Endothelial cell of umbilical vein (primary cell): ENCODE measurements at regions of chr3 and their contacts with region 1.

Region 1: GRCh38 chr3:159884661-159885402 is 103.8 kb upstream of the IL12A start:
- DNase-seq: peak; percentile 75
- H3K4me3 ChIP-seq: no peak overlapping the region
- H3K27ac ChIP-seq: peak overlapping the region; percentile 46
- H3K4me1 ChIP-seq: peaks cover 34% of the 10 kb centered on the region
- H3K27me3 ChIP-seq: no peaks in the 10 kb centered on the region
- CTCF ChIP-seq: peak; percentile 27 to 37
- POLR2A ChIP-seq: no peak

Region 2: GRCh38 chr3:159266779-159267178 is 618.1 kb before region 1 on chr3:
- CTCF ChIA-PET with region 1: interaction called, 6 read pairs
- POLR2A ChIA-PET with region 1: no interaction called
- dilution Hi-C with region 1: no loop called
- intact Hi-C with region 1: loop called (anchors 5 kb)
- DNase-seq: peak; percentile 29
- H3K4me3 ChIP-seq: no peak overlapping the region
- H3K27ac ChIP-seq: no peak overlapping the region
- H3K4me1 ChIP-seq: no peaks in the 10 kb centered on the region
- H3K27me3 ChIP-seq: peaks cover 4 to 12% of the 10 kb centered on the region in 2 experiments
- CTCF ChIP-seq: peak; percentile 15 to 39
- POLR2A ChIP-seq: no peak

Region 3: DNA sequence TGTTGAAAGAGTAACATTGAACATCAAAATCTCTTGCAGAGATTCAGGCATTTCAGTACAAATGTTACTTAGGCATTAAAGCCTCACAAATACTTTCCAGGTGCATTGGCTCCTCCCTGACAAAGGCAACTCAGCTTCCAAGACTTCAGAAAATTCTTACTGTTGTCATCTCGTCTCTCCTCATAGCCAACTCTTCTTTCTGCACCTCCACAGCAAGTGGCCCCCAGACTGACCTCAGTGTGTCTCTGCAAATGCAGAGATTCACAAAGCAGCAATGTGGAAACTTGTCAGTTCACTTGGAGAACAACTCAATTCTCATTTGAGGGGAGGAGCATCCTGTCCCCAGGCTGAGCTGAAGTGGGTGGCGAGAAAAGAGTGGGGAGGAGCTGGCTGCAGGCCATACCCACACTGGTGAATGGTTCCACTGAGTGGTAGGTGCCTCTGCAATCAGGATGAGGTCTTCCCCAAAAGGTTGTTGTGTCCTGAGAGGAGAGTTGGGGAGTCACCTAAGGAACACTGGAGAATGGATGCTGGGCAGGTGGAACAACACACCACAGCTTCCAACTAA is 144.9 kb before region 1 on chr3:
- CTCF ChIA-PET with region 1: no interaction called
- POLR2A ChIA-PET with region 1: no interaction called
- dilution Hi-C with region 1: no loop called
- intact Hi-C with region 1: no loop called
- DNase-seq: no peak
- H3K4me3 ChIP-seq: no peak overlapping the region
- H3K27ac ChIP-seq: no peak overlapping the region
- H3K4me1 ChIP-seq: no peaks in the 10 kb centered on the region
- H3K27me3 ChIP-seq: no peaks in the 10 kb centered on the region
- CTCF ChIP-seq: no peak
- POLR2A ChIP-seq: no peak

Region 4: DNA sequence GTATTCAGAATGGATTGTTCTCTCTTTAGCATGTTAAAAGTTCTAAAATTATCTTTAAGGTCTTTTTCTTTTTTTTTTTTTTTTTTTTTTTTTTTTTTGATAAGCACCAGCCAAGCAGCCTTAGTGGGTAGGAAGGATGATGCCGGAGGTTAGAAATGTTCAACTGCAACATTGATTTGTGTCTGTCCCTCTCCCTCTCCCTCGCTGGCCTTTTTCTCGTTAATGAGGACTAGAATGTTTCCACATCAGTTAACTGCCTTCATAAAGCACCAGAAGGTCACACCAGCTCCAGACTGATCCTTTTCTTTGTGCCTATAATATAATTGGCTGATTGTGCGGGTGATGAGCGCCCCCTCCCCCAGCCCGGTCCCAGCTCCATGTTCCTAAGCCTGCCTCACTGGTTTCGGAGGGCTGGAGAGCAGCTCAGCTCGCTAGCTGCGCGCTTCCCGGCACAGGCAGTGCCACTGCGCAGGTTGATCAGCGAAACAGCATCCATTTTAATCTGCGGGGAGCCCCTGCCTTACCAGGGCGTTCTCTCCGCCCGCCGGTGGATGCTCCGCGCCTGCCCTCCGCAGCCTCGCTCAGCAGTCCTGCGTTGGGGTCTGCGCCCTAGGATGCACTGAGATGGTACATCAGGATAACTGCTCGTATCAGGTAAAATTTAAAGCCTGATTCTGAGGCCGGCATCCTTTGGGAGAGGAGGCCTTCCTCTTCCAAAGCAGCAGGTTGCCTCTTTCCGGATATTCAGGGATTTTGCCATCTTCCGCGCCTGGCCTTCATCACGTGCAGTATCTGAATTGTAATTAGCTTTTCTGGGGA is 45.1 kb before region 1 on chr3:
- CTCF ChIA-PET with region 1: interaction called, 14 read pairs
- POLR2A ChIA-PET with region 1: no interaction called
- dilution Hi-C with region 1: no loop called
- intact Hi-C with region 1: no loop called
- DNase-seq: no peak
- H3K4me3 ChIP-seq: no peak within 1 kb of the TSS
- H3K27ac ChIP-seq: no peak within 1 kb of the TSS
- H3K4me1 ChIP-seq: peaks cover 49% of the 10 kb centered on the region
- H3K27me3 ChIP-seq: no peaks in the 10 kb centered on the region
- CTCF ChIP-seq: no peak
- POLR2A ChIP-seq: no peak

Region 5: DNA sequence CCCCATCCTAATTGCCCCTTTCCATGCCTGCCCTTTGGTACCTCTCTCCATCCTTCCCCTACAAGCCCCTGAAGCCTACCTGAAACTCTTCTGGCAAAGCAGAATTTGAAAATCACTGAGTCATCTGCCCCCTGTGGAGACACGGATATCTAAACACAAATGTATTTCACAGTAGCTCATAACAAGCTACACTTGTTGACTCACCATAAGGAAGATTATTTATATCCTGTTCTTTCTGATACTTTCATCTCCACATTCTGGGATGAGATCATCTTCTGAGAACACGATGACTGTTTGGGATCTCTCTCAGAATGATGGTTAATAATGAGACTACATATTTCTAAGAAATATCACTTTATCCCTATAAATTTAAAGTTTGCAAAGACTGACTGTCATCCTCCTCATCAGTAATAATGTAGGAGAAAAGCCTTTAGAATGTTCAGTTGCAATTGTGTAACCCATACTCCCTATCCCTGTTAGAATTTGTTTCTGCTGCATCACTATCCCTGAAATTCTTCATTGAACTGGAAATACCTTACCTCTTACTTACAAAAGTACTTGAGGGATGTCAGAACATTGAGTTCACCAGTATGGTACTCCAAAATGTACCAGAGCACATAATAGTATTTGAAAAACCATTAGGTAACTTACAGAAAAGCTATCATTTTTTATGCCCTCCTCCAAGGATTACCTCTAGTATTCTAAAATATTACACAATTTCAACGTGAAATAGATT is 12.3 kb before region 1 on chr3:
- CTCF ChIA-PET with region 1: interaction called, 48 read pairs
- POLR2A ChIA-PET with region 1: interaction called, 6 read pairs
- dilution Hi-C with region 1: no loop called
- intact Hi-C with region 1: loop called (anchors 1 kb)
- DNase-seq: peak; percentile 85
- H3K4me3 ChIP-seq: no peak overlapping the region
- H3K27ac ChIP-seq: peak overlapping the region; percentile 92
- H3K4me1 ChIP-seq: peaks cover 19% of the 10 kb centered on the region
- H3K27me3 ChIP-seq: no peaks in the 10 kb centered on the region
- CTCF ChIP-seq: peak; percentile 12 to 25
- POLR2A ChIP-seq: no peak

Region 6: DNA sequence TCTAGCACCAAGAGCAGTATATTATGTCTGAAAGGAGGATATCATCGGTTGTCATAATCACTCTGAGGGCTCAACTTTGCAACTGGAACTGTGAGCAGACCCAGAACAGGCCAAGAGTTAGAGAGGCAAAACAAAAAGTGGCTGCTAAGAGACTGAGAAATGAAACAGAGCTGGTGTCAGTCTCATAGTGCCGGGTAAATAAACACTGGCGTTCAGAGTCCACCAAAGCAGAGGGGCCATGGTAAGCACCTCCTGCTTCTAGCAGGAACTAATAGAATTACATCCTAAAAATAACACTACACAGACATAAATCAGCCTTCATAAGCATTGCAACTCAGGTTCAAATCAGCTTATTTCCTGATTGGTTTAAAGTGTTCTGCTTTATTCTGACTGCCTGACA is 93.5 kb after region 1 on chr3:
- CTCF ChIA-PET with region 1: interaction called, 14 read pairs
- POLR2A ChIA-PET with region 1: no interaction called
- dilution Hi-C with region 1: no loop called
- intact Hi-C with region 1: no loop called
- DNase-seq: no peak
- H3K4me3 ChIP-seq: no peak overlapping the region
- H3K27ac ChIP-seq: no peak overlapping the region
- H3K4me1 ChIP-seq: no peaks in the 10 kb centered on the region
- H3K27me3 ChIP-seq: peaks cover 0 to 2% of the 10 kb centered on the region in 2 experiments
- CTCF ChIP-seq: no peak
- POLR2A ChIP-seq: no peak

Region 7: DNA sequence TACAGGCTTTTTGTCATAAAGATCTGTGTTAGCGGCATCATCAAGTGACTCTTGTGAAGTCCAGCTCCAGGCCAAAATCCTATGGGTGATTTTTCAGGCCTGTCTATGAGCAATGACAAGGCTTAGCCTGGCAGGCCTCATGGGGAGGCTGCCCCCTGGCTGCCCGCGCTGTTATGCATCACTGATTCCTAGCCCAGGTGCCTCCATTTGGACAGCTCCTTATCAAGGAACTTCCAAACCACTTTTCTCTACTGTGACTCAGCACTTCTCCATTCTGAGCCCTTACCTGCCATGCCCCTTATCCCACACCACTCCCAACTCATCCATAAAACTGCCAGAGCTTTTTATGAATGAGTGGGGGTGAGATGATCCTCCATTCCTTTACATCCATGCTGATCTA is 248.9 kb after region 1 on chr3:
- CTCF ChIA-PET with region 1: interaction called, 13 read pairs
- POLR2A ChIA-PET with region 1: no interaction called
- dilution Hi-C with region 1: no loop called
- intact Hi-C with region 1: no loop called
- DNase-seq: peak; percentile 41
- H3K4me3 ChIP-seq: no peak overlapping the region
- H3K27ac ChIP-seq: no peak overlapping the region
- H3K4me1 ChIP-seq: peaks cover 14% of the 10 kb centered on the region
- H3K27me3 ChIP-seq: no peaks in the 10 kb centered on the region
- CTCF ChIP-seq: peak; percentile 38 to 61
- POLR2A ChIP-seq: no peak